WTC11 (cell line): ENCODE measurements at regions of chr10 and their contacts with region 1.

Region 1: GRCh38 chr10:72273410-72274212 is at the start of gene DDIT4:
- DNase-seq: peak; percentile 100
- ATAC-seq: peak; percentile 92
- H3K4me3 Mint-ChIP-seq: peak within 1 kb of the TSS; percentile 95
- H3K27ac Mint-ChIP-seq: peak within 1 kb of the TSS; percentile 99
- H3K4me1 Mint-ChIP-seq: peaks cover 46% of the 10 kb centered on the region
- H3K27me3 Mint-ChIP-seq: no peaks in the 10 kb centered on the region; the same call in 1 of the 2 replicates
- CTCF ChIP-seq: no peak
- total RNA-seq, gene DDIT4: 118 to 158 TPM (median 153 TPM) in 3 replicates

Region 2: DNA sequence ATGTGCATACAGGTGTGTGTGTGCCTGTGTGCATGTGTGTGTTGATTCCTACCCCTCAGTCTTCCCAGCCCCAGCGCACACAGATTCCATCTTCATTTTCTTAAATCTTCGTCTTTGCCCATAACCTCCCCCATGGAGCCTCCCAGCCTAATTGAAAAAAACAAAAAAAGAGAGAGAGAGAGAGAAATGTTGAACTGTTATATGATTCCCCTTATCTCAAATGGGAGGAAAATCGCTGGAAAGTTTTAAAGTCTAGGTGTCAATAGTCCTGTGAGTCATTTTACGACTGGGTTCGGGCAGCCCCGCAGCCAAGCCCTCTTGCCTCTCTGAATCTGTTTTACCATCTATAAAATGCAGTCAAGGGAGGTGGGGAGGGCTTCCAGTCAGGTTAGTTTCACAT is 246.1 kb before region 1 on chr10:
- CTCF ChIA-PET with region 1: no interaction called
- POLR2A ChIA-PET with region 1: no interaction called
- DNase-seq: no peak
- ATAC-seq: no peak
- H3K4me3 Mint-ChIP-seq: no peak overlapping the region
- H3K27ac Mint-ChIP-seq: no peak overlapping the region
- H3K4me1 Mint-ChIP-seq: no peaks in the 10 kb centered on the region
- H3K27me3 Mint-ChIP-seq: no peaks in the 10 kb centered on the region; the same call in 1 of the 2 replicates
- CTCF ChIP-seq: no peak

Region 3: GRCh38 chr10:72215652-72216549 is 57.7 kb before region 1 on chr10 and contains the starts of genes ANAPC16 and ASCC1:
- CTCF ChIA-PET with region 1: interaction called, 4 read pairs
- POLR2A ChIA-PET with region 1: interaction called, 38 read pairs
- DNase-seq: peak; percentile 94
- ATAC-seq: peak; percentile 92
- H3K4me3 Mint-ChIP-seq: peak within 1 kb of the TSS; percentile 97
- H3K27ac Mint-ChIP-seq: peak within 1 kb of the TSS; percentile 100
- H3K4me1 Mint-ChIP-seq: peaks cover 23% of the 10 kb centered on the region
- H3K27me3 Mint-ChIP-seq: no peaks in the 10 kb centered on the region; the same call in 1 of the 2 replicates
- CTCF ChIP-seq: no peak
- total RNA-seq, gene ANAPC16: 52.3 to 72.4 TPM (median 72.3 TPM) in 3 replicates
- total RNA-seq, gene ASCC1: 30.4 to 38.7 TPM (median 32.5 TPM) in 3 replicates

Region 4: GRCh38 chr10:72260588-72261322 is 12.9 kb before region 1 on chr10:
- CTCF ChIA-PET with region 1: interaction called, 75 read pairs
- POLR2A ChIA-PET with region 1: interaction called, 182 read pairs
- DNase-seq: peak; percentile 98
- ATAC-seq: peak; percentile 88
- H3K4me3 Mint-ChIP-seq: peak overlapping the region; percentile 64
- H3K27ac Mint-ChIP-seq: peak overlapping the region; percentile 99
- H3K4me1 Mint-ChIP-seq: peaks cover 70% of the 10 kb centered on the region
- H3K27me3 Mint-ChIP-seq: no peaks in the 10 kb centered on the region; the same call in 1 of the 2 replicates
- CTCF ChIP-seq: no peak

Region 5: DNA sequence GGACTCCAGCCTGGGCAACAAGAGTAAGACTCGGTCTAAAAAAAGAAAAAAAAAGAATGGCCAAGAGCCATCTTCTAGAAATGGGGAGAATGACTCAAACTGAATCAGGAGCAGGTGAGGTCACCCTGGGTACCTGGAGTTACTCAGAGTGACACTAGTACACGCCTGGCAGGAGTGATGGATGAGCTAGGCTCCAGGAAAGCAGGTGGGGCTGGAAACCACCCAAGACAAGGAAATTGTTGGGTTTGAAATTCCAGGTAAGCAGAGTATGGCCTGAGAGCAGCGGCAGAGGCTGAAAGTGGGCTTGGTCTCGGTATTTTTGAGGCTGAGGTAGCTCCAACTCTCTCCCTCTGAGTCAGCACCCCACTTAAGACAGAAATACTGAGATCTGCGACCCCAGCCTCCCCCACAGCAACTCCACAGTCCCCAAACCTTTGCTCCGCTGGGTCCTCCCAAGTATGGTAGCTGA is 18.6 kb after region 1 on chr10:
- CTCF ChIA-PET with region 1: interaction called, 3 read pairs
- POLR2A ChIA-PET with region 1: interaction called, 13 read pairs
- DNase-seq: no peak
- ATAC-seq: no peak
- H3K4me3 Mint-ChIP-seq: no peak overlapping the region
- H3K27ac Mint-ChIP-seq: no peak overlapping the region
- H3K4me1 Mint-ChIP-seq: peaks cover 19% of the 10 kb centered on the region
- H3K27me3 Mint-ChIP-seq: peaks cover 6% of the 10 kb centered on the region; the same call in 1 of the 2 replicates
- CTCF ChIP-seq: no peak

Region 6: GRCh38 chr10:72331601-72332422 is 58.2 kb after region 1 on chr10:
- CTCF ChIA-PET with region 1: interaction called, 22 read pairs
- POLR2A ChIA-PET with region 1: interaction called, 36 read pairs
- DNase-seq: peak; percentile 81
- ATAC-seq: peak; percentile 88
- H3K4me3 Mint-ChIP-seq: peak overlapping the region; percentile 54
- H3K27ac Mint-ChIP-seq: peak overlapping the region; percentile 92
- H3K4me1 Mint-ChIP-seq: peaks cover 48% of the 10 kb centered on the region
- H3K27me3 Mint-ChIP-seq: no peaks in the 10 kb centered on the region
- CTCF ChIP-seq: no peak